GM10248 (cell line): ENCODE measurements at regions of chr2 and their contacts with region 1.

Region 1: DNA sequence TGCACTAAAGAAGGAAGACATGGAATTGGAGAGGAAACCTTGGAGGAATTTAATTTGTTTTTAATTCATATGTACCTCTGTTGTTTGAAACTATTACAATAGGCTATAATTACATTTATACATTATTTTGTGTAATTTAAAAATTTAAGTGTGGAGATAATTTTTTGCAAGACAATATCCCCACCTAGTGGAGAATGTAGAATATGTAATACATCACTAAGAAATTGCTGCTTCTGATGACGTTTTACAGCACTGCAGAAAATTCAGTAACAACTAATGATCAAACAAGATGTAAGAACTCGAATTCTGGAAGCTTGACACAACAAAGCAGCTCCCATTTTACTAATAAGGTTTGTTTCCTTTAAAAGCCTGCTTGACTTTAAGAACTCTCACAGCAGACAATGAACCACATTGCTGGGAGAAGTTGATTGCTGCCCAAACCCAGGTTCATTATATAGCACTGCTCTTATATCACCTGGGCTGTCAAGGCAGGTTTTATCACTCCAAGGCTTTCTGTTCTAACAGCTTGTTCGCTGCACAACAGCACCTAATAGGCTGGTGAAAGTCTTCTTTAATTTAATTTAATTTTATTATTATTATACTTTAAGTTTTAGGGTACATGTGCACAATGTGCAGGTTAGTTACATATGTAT is 53.4 kb downstream of the THADA start:
- DNase-seq: peak; percentile 36
- CTCF ChIP-seq: peak; percentile 47

Region 2: DNA sequence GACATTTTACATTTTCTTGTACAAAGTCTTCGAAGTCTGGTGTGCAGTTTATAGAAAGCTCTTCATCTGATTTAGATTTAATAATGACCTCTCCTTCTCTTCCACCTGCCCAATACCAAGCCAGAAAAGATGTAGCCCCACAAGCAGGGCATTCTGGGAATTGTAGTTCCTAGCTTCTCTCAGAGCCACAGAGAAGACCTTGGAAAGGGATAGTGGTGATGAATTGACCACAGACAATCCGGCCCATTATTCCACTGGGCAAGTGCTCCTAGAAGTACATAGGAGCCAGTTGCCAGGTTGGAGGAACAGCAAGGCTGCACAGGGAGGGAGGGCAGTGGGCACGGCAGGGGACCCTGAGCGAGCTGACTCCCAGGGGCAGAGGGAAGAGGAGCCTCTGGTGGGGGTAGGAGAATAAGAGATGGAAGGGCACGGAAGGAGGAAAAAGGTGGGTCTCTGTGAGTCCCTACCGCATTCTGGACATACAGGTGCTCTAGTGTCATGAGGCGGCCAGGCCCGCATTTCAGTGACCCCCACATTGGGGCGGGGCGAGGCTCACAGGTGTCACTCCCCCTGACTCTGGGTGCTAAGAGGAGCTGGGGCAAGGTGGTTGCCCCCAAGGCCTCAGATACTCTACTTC is 597.5 kb before region 1 on chr2:
- CTCF ChIA-PET with region 1: interaction called, 27 read pairs
- POLR2A ChIA-PET with region 1: no interaction called
- DNase-seq: no peak
- CTCF ChIP-seq: no peak

Region 3: GRCh38 chr2:42974721-42975717 is 567.4 kb before region 1 on chr2:
- CTCF ChIA-PET with region 1: interaction called, 12 read pairs
- POLR2A ChIA-PET with region 1: no interaction called
- DNase-seq: peak; percentile 63
- CTCF ChIP-seq: peak; percentile 85

Region 4: DNA sequence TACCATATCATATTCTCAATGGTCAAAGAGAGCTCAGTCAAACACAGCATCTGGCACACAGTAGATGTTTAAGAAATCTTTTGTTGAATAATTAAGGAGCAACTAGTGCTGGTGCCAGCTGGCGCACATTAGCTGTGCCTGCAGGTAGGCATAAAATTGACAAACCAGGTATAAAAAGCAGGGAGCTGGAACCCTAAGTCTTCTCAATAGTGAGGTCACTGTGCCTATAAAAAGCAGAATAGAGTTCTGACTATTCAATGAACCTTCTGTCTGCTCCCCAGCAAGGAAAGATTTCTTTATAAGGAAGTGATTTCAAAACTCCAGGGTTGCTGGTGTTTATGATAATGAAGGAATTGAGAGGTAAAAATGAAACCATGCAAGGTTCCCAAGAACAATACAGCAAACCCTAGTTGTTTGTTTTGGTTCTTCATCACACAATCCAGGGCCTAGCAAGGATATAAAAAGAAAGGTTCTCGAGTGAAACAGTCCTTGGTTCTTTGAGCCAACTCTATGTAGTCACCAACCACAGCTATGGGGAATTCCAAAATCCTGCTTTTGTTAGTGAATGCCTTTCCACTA is 22.7 kb before region 1 on chr2:
- CTCF ChIA-PET with region 1: interaction called, 11 read pairs
- POLR2A ChIA-PET with region 1: no interaction called
- DNase-seq: no peak
- CTCF ChIP-seq: no peak

Region 5: DNA sequence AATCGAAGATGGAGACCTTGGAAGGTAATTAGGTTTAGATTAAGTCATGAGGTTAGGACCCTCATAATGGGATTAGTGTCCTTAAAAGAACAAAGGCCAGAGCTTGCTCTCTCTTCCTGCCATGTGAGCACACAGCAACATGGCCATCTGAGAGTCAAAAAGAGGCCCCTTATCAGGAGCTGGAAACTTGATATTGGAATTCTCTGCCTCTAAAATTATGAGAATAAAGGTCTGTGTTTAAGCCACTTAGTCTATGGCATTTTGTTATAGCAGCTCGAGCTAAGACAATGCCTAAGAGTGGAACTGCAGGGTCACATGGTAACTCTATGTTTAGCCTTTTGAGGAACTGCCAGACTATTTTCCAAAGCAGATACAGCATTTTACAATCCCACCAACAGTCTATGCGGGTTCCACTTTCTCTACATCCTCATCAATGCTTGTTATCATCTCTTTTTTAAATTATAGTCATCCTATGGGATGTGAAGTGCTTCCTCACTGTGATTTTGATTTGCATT is 11.0 kb after region 1 on chr2:
- CTCF ChIA-PET with region 1: interaction called, 11 read pairs
- POLR2A ChIA-PET with region 1: no interaction called
- DNase-seq: no peak
- CTCF ChIP-seq: no peak

Region 6: DNA sequence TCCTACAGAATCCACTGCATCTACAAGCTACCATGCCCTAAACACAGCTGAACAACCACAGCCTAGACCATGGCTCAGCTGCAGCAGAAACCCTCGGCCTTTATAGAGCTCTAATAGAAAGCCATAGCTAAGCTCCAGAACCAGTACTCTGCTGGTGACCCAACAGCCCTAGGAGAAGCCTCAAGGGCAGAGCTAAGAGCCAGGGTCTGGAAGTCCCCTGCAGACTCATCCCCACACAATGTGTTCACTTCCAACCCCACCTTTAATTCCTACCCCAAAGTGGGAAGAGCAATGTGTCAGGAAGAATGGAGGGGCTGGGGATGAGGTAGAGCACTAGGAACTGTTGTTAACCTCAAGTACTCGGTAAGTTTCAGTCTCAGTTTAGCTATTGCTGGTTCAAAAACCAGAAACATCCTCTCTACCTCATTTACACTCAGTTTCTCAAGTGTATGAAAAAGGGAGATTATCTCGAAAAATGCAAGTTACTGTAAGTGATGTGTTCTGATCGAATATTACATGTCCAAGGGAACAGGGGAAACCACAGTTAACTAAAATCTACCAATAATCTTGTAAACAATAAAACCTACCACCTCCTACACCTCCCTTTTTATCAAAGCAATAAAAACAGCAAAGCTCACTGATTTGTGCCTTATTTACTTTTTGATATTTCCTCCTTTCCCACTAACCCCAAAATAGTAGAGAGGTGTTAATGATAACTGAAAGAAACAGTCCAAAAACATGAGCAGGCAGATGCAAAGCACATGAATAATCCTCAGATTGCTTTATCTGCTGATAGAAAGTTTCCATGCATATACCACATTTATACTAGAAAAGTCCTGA is 17.2 kb after region 1 on chr2:
- CTCF ChIA-PET with region 1: interaction called, 10 read pairs
- POLR2A ChIA-PET with region 1: no interaction called
- DNase-seq: peak; percentile 31
- CTCF ChIP-seq: no peak

Region 7: DNA sequence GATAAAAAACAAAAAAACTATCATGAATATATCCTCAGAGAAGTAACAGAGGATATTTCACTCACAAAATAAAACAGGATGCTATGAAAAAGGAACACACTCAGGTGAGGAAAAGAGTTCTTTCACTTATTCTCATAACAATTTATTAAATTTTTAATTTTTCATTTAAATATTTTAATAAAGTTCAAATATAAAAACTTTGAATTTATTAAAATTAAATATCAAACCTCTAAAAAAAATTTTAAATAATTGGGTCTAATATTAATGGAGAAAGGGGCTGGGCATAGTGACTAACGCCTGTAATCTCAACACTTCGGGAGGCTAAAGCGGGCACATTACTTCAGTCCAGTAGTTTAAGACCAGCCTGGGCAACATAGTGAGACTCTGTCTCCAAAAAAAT is 43.3 kb after region 1 on chr2:
- CTCF ChIA-PET with region 1: no interaction called
- POLR2A ChIA-PET with region 1: no interaction called
- DNase-seq: no peak
- CTCF ChIP-seq: no peak

Region 8: DNA sequence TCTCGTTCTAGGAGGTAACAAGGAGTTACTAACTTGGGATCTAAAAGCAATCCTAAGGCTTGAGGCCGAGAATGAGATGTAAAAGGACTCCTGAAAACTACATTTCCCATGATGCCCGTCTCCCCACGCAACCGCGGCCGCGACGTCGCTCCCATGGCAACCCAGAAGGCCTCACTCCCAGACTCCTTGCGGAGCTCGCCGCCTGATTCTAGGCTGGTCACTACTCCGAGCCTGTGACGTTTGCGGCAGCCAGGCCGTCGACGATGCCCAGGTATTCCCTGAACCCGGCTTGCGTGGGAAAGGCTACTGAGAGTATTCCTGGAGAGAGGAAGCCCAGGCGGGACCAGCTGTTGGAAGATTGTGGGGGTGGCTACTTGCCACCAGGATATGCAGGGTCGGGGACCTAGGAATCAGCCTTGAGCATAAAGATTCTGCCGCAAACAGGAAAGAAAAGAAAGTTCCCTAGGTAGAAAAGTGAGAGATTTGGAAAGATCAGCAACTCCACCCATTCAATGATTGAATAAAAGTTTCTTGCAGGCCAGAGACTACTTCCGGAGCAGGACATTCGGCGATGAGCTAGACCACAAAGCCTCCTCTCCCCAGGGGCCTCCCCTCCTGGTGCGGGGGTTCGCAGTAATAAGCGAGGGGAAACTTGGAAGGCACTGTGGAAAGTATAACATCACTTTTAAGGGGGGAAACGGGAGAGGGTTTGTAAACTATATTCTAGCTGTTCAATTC is 231.6 kb after region 1 on chr2 and contains the start of gene DYNC2LI1:
- CTCF ChIA-PET with region 1: no interaction called
- POLR2A ChIA-PET with region 1: no interaction called
- DNase-seq: peak; percentile 91
- CTCF ChIP-seq: no peak